ENCODE measurements at regions of chr6 and their contacts with region 1.

Region 1: GRCh38 chr6:122381497-122382265 is 17.8 kb upstream of the HSF2 start:
- DNase-seq: peak; percentile 75
- ATAC-seq: peak; percentile 94
- H3K4me3 Mint-ChIP-seq: no peak overlapping the region
- H3K27ac Mint-ChIP-seq: no peak overlapping the region
- H3K4me1 Mint-ChIP-seq: peaks cover 4% of the 10 kb centered on the region
- H3K27me3 Mint-ChIP-seq: peaks cover 4% of the 10 kb centered on the region
- CTCF ChIP-seq: peak; percentile 72

Region 2: GRCh38 chr6:122361314-122361979 is 20.2 kb before region 1 on chr6:
- CTCF ChIA-PET with region 1: no interaction called
- POLR2A ChIA-PET with region 1: no interaction called
- intact Hi-C with region 1: no loop called
- DNase-seq: no peak
- ATAC-seq: no peak
- H3K4me3 Mint-ChIP-seq: no peak overlapping the region
- H3K27ac Mint-ChIP-seq: no peak overlapping the region
- H3K4me1 Mint-ChIP-seq: no peaks in the 10 kb centered on the region
- H3K27me3 Mint-ChIP-seq: peaks cover 2% of the 10 kb centered on the region
- CTCF ChIP-seq: no peak

Region 3: DNA sequence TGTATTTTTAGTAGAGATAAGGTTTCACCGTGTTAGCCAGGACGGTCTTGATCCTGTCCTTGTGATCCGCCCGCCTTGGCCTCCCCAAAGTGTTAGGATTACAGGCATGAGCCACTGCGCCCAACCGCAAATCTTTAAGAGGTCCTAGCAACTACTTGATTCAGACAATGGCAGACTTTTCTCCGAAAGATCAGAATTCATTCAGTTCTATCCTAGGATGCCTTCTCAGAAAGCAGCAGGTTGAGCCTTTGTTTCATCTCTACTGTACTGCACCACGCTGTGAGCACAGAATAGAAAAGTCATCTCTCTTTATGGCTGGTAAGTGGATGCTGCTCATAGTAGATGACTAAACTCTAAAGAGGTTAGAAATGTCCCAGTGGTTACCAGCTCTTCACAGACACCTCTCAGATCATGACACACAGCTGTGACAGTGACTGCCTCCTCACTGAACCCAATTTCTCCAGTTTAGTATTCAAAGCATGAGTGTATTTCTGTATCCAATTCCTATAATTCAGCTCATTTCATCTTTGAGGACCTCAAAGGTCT is 11.7 kb after region 1 on chr6:
- CTCF ChIA-PET with region 1: interaction called, 17 read pairs
- POLR2A ChIA-PET with region 1: no interaction called
- intact Hi-C with region 1: no loop called
- DNase-seq: peak; percentile 21
- ATAC-seq: peak; percentile 97
- H3K4me3 Mint-ChIP-seq: no peak overlapping the region
- H3K27ac Mint-ChIP-seq: no peak overlapping the region
- H3K4me1 Mint-ChIP-seq: peaks cover 13% of the 10 kb centered on the region
- H3K27me3 Mint-ChIP-seq: peaks cover 2% of the 10 kb centered on the region
- CTCF ChIP-seq: no peak

Region 4: DNA sequence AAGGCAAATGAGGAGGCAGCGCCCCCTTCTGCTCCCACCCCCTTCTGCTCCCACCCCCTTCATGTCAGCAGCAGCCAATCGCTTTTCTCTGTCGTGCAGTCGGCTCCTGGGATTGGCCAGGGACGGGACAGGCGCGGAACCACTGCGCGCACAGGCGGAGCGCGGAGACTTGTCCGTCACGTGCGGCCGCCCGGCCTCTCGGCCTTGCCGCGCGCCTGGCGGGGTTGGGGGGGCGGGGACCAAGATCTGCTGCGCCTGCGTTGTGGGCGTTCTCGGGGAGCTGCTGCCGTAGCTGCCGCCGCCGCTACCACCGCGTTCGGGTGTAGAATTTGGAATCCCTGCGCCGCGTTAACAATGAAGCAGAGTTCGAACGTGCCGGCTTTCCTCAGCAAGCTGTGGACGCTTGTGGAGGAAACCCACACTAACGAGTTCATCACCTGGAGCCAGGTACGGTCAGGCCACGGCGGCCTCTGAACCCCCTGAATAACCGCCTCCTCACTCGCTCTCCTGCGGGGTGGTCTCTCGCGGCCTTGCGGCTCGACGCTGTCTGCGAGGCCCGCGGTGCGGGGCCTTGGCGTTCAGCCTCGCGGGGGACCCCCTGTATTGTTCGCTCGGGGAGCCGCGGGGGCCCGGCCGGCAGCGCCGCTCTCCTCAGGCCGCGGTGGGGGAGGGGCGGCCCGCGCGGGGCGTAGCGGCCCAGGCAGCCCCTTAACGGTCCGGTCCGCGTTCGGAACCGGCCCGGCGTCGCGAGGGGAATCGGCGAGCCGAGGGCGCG is 17.9 kb after region 1 on chr6 and contains the start of gene HSF2:
- CTCF ChIA-PET with region 1: interaction called, 17 read pairs
- POLR2A ChIA-PET with region 1: interaction called, 3 read pairs
- intact Hi-C with region 1: no loop called
- DNase-seq: peak; percentile 96
- ATAC-seq: peak; percentile 98
- H3K4me3 Mint-ChIP-seq: peak within 1 kb of the TSS; percentile 93
- H3K27ac Mint-ChIP-seq: peak within 1 kb of the TSS; percentile 96
- H3K4me1 Mint-ChIP-seq: peaks cover 39% of the 10 kb centered on the region
- H3K27me3 Mint-ChIP-seq: no peaks in the 10 kb centered on the region
- CTCF ChIP-seq: no peak
- total RNA-seq, gene HSF2: 19.5 to 22.4 TPM

Measured in activated CD8-positive, alpha-beta T cell treated with anti-CD3 and anti-CD28 coated beads for 36 hours (primary cell).